Activated CD8-positive, alpha-beta T cell treated with anti-CD3 and anti-CD28 coated beads for 36 hours (primary cell): ENCODE measurements at regions of chr12 and their contacts with region 1.

Region 1: DNA sequence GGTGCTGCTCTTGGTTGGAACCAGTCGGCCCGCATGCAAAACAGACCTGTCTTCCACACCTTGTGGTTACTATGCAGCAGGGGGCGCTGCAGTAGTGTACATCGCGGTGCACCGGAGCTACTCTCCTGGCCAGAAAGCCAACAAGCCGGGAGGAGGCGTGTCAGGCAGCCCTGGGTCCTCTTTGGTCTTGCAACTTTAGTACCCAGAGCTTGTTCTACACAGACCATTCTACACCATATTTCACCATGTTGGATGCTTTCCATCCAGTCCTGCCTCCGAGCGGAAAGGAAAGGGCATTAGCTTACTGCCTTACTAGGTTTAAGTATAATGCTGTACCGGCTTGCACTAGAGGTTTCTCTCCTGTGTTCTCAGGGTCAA is 927 bp upstream of the TMTC2 start:
- DNase-seq: peak; percentile 97
- ATAC-seq: peak; percentile 66
- H3K4me3 Mint-ChIP-seq: peak overlapping the region; percentile 89
- H3K27ac Mint-ChIP-seq: peak overlapping the region; percentile 79
- H3K4me1 Mint-ChIP-seq: peaks cover 7% of the 10 kb centered on the region
- H3K27me3 Mint-ChIP-seq: peaks cover 6% of the 10 kb centered on the region
- CTCF ChIP-seq: peak; percentile 55

Region 2: GRCh38 chr12:82082501-82082900 is 603.3 kb before region 1 on chr12:
- CTCF ChIA-PET with region 1: no interaction called
- POLR2A ChIA-PET with region 1: no interaction called
- intact Hi-C with region 1: no loop called
- DNase-seq: no peak
- ATAC-seq: no peak
- H3K4me3 Mint-ChIP-seq: no peak overlapping the region
- H3K27ac Mint-ChIP-seq: no peak overlapping the region
- H3K4me1 Mint-ChIP-seq: no peaks in the 10 kb centered on the region
- H3K27me3 Mint-ChIP-seq: no peaks in the 10 kb centered on the region
- CTCF ChIP-seq: no peak

Region 3: GRCh38 chr12:82672811-82673495 is 12.8 kb before region 1 on chr12:
- CTCF ChIA-PET with region 1: interaction called, 36 read pairs
- POLR2A ChIA-PET with region 1: interaction called, 3 read pairs
- intact Hi-C with region 1: no loop called
- DNase-seq: no peak
- ATAC-seq: no peak
- H3K4me3 Mint-ChIP-seq: no peak overlapping the region
- H3K27ac Mint-ChIP-seq: no peak overlapping the region
- H3K4me1 Mint-ChIP-seq: no peaks in the 10 kb centered on the region
- H3K27me3 Mint-ChIP-seq: peaks cover 20% of the 10 kb centered on the region
- CTCF ChIP-seq: no peak

Region 4: GRCh38 chr12:83823431-83823963 is 1137.7 kb after region 1 on chr12:
- CTCF ChIA-PET with region 1: interaction called, 15 read pairs
- POLR2A ChIA-PET with region 1: no interaction called
- intact Hi-C with region 1: no loop called
- DNase-seq: peak; percentile 58
- ATAC-seq: peak; percentile 74
- H3K4me3 Mint-ChIP-seq: no peak overlapping the region
- H3K27ac Mint-ChIP-seq: no peak overlapping the region
- H3K4me1 Mint-ChIP-seq: no peaks in the 10 kb centered on the region
- H3K27me3 Mint-ChIP-seq: no peaks in the 10 kb centered on the region
- CTCF ChIP-seq: peak; percentile 25

Region 5: DNA sequence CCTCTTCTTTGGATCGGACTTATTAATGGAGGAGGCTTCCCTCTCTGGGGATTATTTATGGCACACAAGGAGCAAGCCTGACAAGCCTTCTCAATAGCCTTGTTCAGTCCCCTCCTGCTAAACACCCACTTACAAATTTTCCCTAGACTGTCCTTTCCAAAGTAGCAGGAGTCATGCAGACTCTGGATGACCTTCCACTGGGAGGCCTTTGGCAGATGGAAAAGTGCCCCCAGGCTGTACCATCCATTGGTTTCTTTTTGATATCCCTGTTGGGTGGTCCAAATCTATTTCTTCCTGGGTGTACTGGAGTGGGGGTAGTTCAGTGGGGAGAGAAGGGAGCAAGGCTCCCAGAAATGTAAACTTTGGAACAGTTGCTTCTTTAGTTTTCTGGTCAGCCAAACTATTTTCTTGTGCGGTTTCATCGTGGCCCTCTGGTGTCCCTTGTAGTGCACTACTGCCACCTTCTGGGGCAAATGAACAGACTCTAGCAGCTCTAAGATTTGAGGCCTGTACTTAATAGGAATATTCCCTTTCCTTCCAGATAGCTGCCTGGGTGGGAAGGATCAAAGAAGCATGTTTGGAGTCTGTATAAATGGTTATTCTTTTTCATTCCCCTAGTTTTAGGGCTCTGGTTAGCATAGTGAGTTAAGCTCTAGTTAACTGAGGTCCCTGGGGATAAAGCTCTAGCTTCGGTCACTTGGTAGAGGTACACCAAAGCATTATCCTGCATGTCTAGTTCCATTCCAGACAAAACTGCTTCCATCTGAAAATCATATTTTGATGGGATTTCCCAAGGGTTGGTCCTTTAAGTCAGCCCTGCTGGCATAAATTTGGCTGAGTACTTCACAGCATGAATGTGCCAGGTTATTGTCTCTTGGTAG is 1817.4 kb after region 1 on chr12:
- CTCF ChIA-PET with region 1: interaction called, 8 read pairs
- POLR2A ChIA-PET with region 1: no interaction called
- intact Hi-C with region 1: loop called (anchors 10 kb)
- DNase-seq: peak; percentile 25
- ATAC-seq: no peak
- H3K4me3 Mint-ChIP-seq: no peak overlapping the region
- H3K27ac Mint-ChIP-seq: no peak overlapping the region
- H3K4me1 Mint-ChIP-seq: no peaks in the 10 kb centered on the region
- H3K27me3 Mint-ChIP-seq: no peaks in the 10 kb centered on the region
- CTCF ChIP-seq: peak; percentile 56